Common myeloid progenitor, CD34-positive (primary cell): ENCODE measurements at regions of chr6 and their contacts with region 1.

Region 1: GRCh38 chr6:122491919-122492555 is 20.4 kb upstream of the SERINC1 start:
- DNase-seq: peak; percentile 71 to 86 (median 85)
- H3K4me3 ChIP-seq: peak overlapping the region in 1 of 7 experiments; percentile 20
- H3K27ac ChIP-seq: no peak overlapping the region
- H3K4me1 ChIP-seq: peaks cover 5 to 16% (median 10%) of the 10 kb centered on the region in 4 experiments
- H3K27me3 ChIP-seq: peaks cover 0 to 12% (median 0%) of the 10 kb centered on the region in 5 experiments

Region 2: GRCh38 chr6:122422614-122423267 is 69.3 kb before region 1 on chr6:
- CTCF ChIA-PET with region 1: no interaction called
- POLR2A ChIA-PET with region 1: no interaction called
- DNase-seq: no peak
- H3K4me3 ChIP-seq: no peak overlapping the region
- H3K27ac ChIP-seq: no peak overlapping the region
- H3K4me1 ChIP-seq: no peaks in the 10 kb centered on the region
- H3K27me3 ChIP-seq: no peaks in the 10 kb centered on the region

Region 3: GRCh38 chr6:122471107-122472021 is 20.7 kb before region 1 on chr6 and contains the start of gene SERINC1:
- CTCF ChIA-PET with region 1: interaction called, 16 read pairs
- POLR2A ChIA-PET with region 1: no interaction called
- DNase-seq: peak; percentile 95 to 97 (median 97)
- H3K4me3 ChIP-seq: peak within 1 kb of the TSS; percentile 84 to 99 (median 91)
- H3K27ac ChIP-seq: peak within 1 kb of the TSS; percentile 94 to 98
- H3K4me1 ChIP-seq: peaks cover 3 to 21% (median 15%) of the 10 kb centered on the region in 4 experiments
- H3K27me3 ChIP-seq: no peaks in the 10 kb centered on the region

Region 4: GRCh38 chr6:122730775-122731386 is 238.8 kb after region 1 on chr6:
- CTCF ChIA-PET with region 1: interaction called, 28 read pairs
- POLR2A ChIA-PET with region 1: no interaction called
- DNase-seq: peak in 2 of 3 donors; percentile 61 to 71
- H3K4me3 ChIP-seq: no peak overlapping the region
- H3K27ac ChIP-seq: no peak overlapping the region
- H3K4me1 ChIP-seq: no peaks in the 10 kb centered on the region
- H3K27me3 ChIP-seq: peaks cover 0 to 12% (median 8%) of the 10 kb centered on the region in 5 experiments